CD4-positive, alpha-beta T cell (primary cell): ENCODE measurements at regions of chr5 and their contacts with region 1.

Region 1: GRCh38 chr5:35656721-35657120 is 39.1 kb downstream of the SPEF2 start:
- DNase-seq: no peak
- ATAC-seq: no peak
- H3K4me3 ChIP-seq: no peak overlapping the region
- H3K4me3 Mint-ChIP-seq: no peak overlapping the region
- H3K27ac ChIP-seq: no peak overlapping the region
- H3K27ac Mint-ChIP-seq: no peak overlapping the region
- H3K4me1 ChIP-seq: no peaks in the 10 kb centered on the region
- H3K4me1 Mint-ChIP-seq: peaks cover 31% of the 10 kb centered on the region
- H3K27me3 ChIP-seq: no peaks in the 10 kb centered on the region
- H3K27me3 Mint-ChIP-seq: no peaks in the 10 kb centered on the region
- CTCF ChIP-seq: no peak

Region 2: GRCh38 chr5:35683466-35683865 is 26.7 kb after region 1 on chr5:
- CTCF ChIA-PET with region 1: no interaction called
- POLR2A ChIA-PET with region 1: no interaction called
- intact Hi-C with region 1: no loop called
- DNase-seq: no peak
- ATAC-seq: no peak
- H3K4me3 ChIP-seq: no peak overlapping the region
- H3K4me3 Mint-ChIP-seq: no peak overlapping the region
- H3K27ac ChIP-seq: no peak overlapping the region
- H3K27ac Mint-ChIP-seq: no peak overlapping the region
- H3K4me1 ChIP-seq: peaks cover 6% of the 10 kb centered on the region
- H3K4me1 Mint-ChIP-seq: peaks cover 19% of the 10 kb centered on the region
- H3K27me3 ChIP-seq: no peaks in the 10 kb centered on the region
- H3K27me3 Mint-ChIP-seq: no peaks in the 10 kb centered on the region
- CTCF ChIP-seq: no peak

Region 3: GRCh38 chr5:35762368-35762767 is 105.6 kb after region 1 on chr5:
- CTCF ChIA-PET with region 1: interaction called, 3 read pairs
- POLR2A ChIA-PET with region 1: interaction called, 4 read pairs
- intact Hi-C with region 1: loop called in 1 of 2 experiments (anchors 5 kb)
- DNase-seq: no peak
- ATAC-seq: no peak
- H3K4me3 ChIP-seq: no peak overlapping the region
- H3K4me3 Mint-ChIP-seq: no peak overlapping the region
- H3K27ac ChIP-seq: no peak overlapping the region
- H3K27ac Mint-ChIP-seq: peak overlapping the region; percentile 54
- H3K4me1 ChIP-seq: peaks cover 2% of the 10 kb centered on the region
- H3K4me1 Mint-ChIP-seq: peaks cover 56% of the 10 kb centered on the region
- H3K27me3 ChIP-seq: no peaks in the 10 kb centered on the region
- H3K27me3 Mint-ChIP-seq: no peaks in the 10 kb centered on the region
- CTCF ChIP-seq: no peak